Mammary epithelial cell (primary cell): ENCODE measurements at regions of chr4 and their contacts with region 1.

Region 1: DNA sequence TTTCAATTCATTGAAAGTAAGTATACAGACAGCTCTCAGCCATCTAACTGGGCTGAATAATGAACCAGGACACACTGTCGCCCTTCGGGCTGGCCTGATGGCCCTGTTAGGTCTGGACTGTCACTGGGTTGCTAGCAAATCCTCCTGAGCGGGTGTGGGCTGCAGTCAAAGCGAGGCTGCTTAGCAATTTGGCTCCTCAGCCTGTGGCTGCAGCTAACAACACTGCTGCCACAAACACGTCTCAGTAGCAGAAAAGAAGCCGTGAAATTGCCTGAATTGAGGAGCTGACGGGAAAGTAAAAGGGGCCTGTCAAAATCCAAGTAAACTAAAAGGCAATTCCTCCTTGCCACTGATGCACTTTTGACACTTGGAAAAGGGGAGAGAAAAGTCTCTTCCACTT is 72.8 kb downstream of the SMIM20 start:
- DNase-seq: no peak
- H3K4me3 ChIP-seq: no peak overlapping the region
- H3K27ac ChIP-seq: no peak overlapping the region
- H3K4me1 ChIP-seq: no peaks in the 10 kb centered on the region
- H3K27me3 ChIP-seq: no peaks in the 10 kb centered on the region
- CTCF ChIP-seq: no peak

Region 2: DNA sequence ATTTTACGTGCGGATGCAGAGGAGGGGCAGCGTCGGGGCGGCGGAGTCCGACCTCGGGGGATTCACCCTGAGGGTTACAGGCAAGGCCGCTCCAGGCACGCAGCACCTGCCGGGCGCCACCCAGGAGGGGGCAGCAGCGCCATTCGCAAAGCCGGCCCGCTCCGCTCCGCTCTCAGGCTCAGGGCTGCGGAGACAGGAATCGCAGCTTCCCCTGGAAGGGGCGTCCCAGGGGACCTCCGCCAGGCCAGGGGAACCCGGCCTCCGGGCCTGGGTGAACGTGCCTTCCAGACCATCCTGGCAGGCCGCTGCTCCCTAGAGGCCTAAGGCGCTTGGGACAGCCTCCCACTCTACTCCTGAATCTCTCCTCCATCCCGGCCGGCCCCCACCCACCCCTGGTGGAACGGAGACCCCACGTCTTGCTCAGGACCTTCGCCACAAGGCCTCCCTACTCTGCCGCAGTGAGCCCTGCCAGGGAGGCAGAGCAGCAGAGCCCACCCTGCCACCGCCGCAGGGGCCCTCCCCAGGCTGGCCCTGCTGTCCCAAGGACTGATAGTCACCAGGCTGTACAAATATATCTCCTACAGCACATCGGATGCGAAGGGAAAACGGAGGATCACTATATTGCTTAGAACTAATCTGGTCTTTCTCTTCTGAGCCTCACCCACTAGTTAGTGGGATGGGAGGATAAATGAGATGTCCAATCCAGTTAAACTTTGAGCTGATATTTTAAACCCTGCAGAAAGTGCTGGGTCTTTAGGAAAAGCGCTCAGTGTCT is 42.2 kb after region 1 on chr4:
- CTCF ChIA-PET with region 1: no interaction called
- dilution Hi-C with region 1: no loop called
- in situ Hi-C with region 1: no loop called
- intact Hi-C with region 1: no loop called
- DNase-seq: no peak
- H3K4me3 ChIP-seq: no peak overlapping the region
- H3K27ac ChIP-seq: no peak overlapping the region
- H3K4me1 ChIP-seq: no peaks in the 10 kb centered on the region
- H3K27me3 ChIP-seq: peaks cover 2% of the 10 kb centered on the region
- CTCF ChIP-seq: no peak

Region 3: DNA sequence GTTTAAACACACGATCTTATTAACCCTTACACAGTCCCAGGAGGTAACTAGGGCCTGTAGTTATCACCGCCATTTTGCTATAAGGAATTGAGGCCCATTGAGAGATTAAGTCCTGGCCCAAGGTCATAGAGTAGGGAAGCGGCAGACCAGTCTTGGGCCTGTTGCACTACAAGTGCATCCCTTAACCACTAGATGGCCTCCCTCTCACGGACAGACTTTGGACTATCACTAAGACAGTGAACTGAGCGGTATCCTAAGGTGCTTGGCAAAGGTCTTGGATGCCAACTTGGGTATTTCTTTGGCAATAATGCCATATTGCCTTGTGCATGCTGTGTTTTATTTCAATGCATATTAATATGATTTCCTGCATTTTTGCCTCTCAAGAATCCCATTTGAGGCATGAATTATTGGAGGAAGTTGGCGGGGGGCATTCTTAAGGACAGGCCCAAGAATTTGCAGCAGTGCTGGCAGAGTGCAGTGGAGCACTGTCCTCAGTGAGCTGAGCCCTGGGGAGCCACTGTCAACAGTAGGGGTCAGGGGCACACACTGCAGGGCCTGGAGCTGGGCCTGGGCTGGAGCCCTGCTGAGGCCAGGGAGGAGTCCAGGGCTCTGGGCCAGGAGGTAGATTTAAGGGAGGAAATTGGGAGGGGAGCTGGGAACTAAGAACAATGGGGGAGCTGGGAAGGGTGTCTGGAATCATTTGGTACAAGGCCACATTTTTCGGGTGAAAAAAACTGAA is 74.6 kb after region 1 on chr4:
- CTCF ChIA-PET with region 1: no interaction called
- dilution Hi-C with region 1: no loop called
- in situ Hi-C with region 1: no loop called
- intact Hi-C with region 1: loop called (anchors 5 kb)
- DNase-seq: peak; percentile 32
- H3K4me3 ChIP-seq: no peak overlapping the region
- H3K27ac ChIP-seq: no peak overlapping the region
- H3K4me1 ChIP-seq: peaks cover 4% of the 10 kb centered on the region
- H3K27me3 ChIP-seq: peaks cover 6% of the 10 kb centered on the region
- CTCF ChIP-seq: peak; percentile 49 to 64

Region 4: DNA sequence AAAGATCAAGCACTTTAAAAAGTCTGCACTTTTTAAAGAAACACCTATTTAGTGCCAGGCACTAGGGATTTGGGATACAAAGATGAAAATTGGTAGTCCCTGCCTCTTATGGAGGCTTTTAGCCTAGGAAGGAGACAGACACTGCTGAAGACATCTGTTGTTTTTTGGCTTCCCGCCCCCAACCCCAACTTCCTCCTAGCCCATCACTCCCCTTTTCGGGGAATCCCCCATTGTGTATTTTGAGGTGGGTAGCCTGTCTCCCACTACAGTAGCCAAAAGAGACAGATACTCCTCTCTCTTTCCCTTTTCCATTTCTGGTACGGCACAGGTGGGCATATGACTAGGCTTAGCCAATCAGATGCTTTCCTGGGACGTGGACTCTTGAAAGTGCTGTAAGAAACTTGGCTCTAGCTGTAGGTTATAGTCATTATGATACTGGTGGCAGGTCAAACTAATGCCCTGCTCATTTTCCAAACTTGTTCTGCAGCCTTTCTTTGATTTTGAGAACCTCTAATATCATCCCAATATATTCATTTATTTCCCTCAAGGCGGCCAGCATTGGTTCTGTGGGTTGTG is 139.4 kb after region 1 on chr4:
- CTCF ChIA-PET with region 1: no interaction called
- dilution Hi-C with region 1: no loop called
- in situ Hi-C with region 1: no loop called
- intact Hi-C with region 1: loop called (anchors 5 kb)
- DNase-seq: no peak
- H3K4me3 ChIP-seq: no peak overlapping the region
- H3K27ac ChIP-seq: no peak overlapping the region
- H3K4me1 ChIP-seq: peaks cover 15% of the 10 kb centered on the region
- H3K27me3 ChIP-seq: no peaks in the 10 kb centered on the region
- CTCF ChIP-seq: no peak

Region 5: DNA sequence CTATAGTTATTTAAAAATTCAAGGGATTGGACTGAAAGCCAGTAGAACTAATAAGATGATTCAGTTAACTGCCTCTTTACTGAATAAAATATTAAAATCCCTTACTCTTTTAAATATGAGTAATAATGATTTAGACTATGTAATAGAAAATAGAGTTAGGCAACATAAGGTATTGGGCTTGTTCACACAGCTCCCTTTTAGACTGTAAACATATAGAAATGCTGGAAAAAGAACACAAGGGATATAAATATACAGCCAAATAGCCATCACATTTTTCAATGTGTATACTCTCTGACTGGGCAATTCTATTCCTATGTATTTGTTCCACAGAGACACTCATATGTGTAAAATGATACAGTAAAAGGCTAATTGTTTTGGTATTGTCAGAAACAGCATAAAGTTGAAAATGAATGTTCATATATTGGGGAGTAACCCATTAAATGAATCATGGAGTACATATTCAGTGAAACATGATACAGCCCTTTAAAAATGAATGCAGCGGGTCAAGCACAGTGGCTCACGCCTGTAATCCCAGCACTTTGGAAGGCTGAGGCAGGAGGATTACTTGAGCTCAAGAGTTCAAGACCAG is 726.9 kb after region 1 on chr4:
- CTCF ChIA-PET with region 1: no interaction called
- dilution Hi-C with region 1: no loop called
- in situ Hi-C with region 1: loop called in 1 of 2 experiments (anchors 25 kb)
- intact Hi-C with region 1: loop called (anchors 5 kb)
- DNase-seq: peak; percentile 28
- H3K4me3 ChIP-seq: no peak overlapping the region
- H3K27ac ChIP-seq: no peak overlapping the region
- H3K4me1 ChIP-seq: peaks cover 10% of the 10 kb centered on the region
- H3K27me3 ChIP-seq: no peaks in the 10 kb centered on the region
- CTCF ChIP-seq: no peak